ENCODE measurements at regions of chr18 and their contacts with region 1.

Region 1: GRCh38 chr18:22542401-22542835 is 124.7 kb upstream of the CTAGE1 start:
- DNase-seq: no peak
- H3K4me3 ChIP-seq: no peak overlapping the region
- CTCF ChIP-seq: no peak
- POLR2A ChIP-seq: no peak

Region 2: GRCh38 chr18:22494771-22495170 is 47.6 kb before region 1 on chr18:
- intact Hi-C with region 1: loop called (anchors 10 kb)
- DNase-seq: no peak
- H3K4me3 ChIP-seq: no peak overlapping the region
- CTCF ChIP-seq: no peak
- POLR2A ChIP-seq: no peak

Region 3: DNA sequence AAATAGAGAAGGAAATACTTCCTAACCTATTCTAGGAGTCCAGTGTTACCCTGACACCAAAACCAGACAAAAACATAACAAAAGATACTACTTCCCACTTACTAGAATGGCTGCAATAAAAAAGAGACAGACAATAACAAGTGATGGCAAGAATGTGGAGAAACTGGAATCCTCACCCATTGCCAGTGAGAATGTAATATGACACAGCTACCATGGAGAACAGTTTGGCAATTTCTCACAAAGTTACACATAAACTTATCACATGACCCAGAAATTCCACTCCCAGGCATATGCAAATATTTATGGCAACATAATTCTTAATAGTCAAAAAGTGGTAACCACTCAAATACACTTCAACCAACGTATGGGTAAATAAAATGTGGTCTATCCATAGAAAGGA is 85.1 kb after region 1 on chr18:
- intact Hi-C with region 1: no loop called
- DNase-seq: no peak
- H3K4me3 ChIP-seq: no peak overlapping the region
- CTCF ChIP-seq: no peak
- POLR2A ChIP-seq: no peak

Measured in lower leg skin (tissue), 4 donors.